ENCODE measurements at regions of chr9 and their contacts with region 1.

Region 1: GRCh38 chr9:125841444-125841843 is 94.3 kb downstream of the PBX3 start:
- DNase-seq: no peak

Region 2: GRCh38 chr9:125867751-125868415 is 26.4 kb after region 1 on chr9:
- intact Hi-C with region 1: loop called (anchors 2 kb)
- DNase-seq: no peak

Measured in head of caudate nucleus (tissue), 42 donors.